B cell (primary cell): ENCODE measurements at regions of chrX and their contacts with region 1.

Region 1: GRCh38 chrX:49878834-49879659 is at the start of gene USP27X:
- DNase-seq: peak; percentile 90
- ATAC-seq: peak; percentile 93
- H3K4me3 ChIP-seq: peak within 1 kb of the TSS; percentile 8 to 64 (median 54)
- H3K4me3 Mint-ChIP-seq: peak within 1 kb of the TSS; percentile 86
- H3K27ac ChIP-seq: peak within 1 kb of the TSS; percentile 49 to 65
- H3K27ac Mint-ChIP-seq: peak within 1 kb of the TSS; percentile 83
- H3K4me1 ChIP-seq: peaks cover 10 to 26% of the 10 kb centered on the region in 2 donors
- H3K4me1 Mint-ChIP-seq: peaks cover 25% of the 10 kb centered on the region
- H3K27me3 ChIP-seq: no peaks in the 10 kb centered on the region
- H3K27me3 Mint-ChIP-seq: no peaks in the 10 kb centered on the region
- CTCF ChIP-seq: peak; percentile 65
- total RNA-seq, gene USP27X: 5.3 and 6.1 TPM in 2 replicates

Region 2: GRCh38 chrX:49761481-49761880 is 117.6 kb before region 1 on chrX:
- CTCF ChIA-PET with region 1: interaction called, 4 read pairs
- POLR2A ChIA-PET with region 1: no interaction called
- intact Hi-C with region 1: loop called (anchors 5 kb)
- DNase-seq: peak; percentile 13
- ATAC-seq: no peak
- H3K4me3 ChIP-seq: no peak overlapping the region
- H3K4me3 Mint-ChIP-seq: no peak overlapping the region
- H3K27ac ChIP-seq: no peak overlapping the region
- H3K27ac Mint-ChIP-seq: no peak overlapping the region
- H3K4me1 ChIP-seq: no peaks in the 10 kb centered on the region
- H3K4me1 Mint-ChIP-seq: no peaks in the 10 kb centered on the region
- H3K27me3 ChIP-seq: no peaks in the 10 kb centered on the region
- H3K27me3 Mint-ChIP-seq: peaks cover 4% of the 10 kb centered on the region
- CTCF ChIP-seq: peak; percentile 54

Region 3: DNA sequence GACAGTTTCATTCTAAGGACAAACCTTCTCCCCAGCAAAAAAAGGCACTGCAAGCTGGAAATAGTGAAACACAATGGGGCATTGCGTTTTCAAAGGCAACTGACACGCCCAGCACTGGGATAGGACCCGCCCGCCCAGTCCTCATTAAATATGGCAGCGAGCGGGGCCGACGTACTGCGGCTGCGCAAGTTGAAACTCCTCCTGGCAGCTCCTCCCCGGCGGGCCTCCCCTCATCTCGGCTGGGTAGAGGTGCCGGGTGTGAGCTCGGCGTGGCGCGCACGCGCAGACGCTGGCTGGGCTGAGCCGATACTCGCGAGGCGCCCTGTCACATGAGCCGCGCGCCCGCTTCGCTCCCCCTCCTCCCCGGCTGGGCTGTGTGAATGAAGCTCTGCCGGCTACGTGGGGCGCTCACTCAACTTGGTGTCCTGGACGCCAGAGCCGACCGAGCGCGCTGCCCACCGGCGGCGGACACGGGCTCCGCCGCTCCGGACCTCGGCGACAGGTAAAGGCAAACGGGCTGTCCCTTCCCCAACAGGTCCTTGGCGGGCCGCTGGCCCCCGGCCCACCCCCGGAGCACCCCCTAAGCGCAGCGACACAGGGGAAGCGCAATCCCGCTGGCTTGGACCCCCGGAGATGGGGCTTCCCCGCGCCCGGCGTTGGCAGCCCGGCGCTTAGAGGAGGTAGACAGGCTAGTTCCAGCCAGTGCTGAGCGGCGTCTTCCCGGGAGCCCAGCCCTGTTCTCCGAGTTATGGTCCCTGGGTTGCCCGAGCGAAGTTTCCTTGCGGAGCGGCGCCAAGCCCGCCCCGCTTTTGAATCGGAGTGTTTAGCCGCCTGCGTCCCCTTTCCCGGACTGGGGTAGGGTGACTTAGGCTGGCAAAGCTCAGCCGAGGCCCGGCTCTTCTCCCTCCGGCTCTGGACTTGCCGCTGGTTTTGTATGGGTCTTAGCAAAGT is 43.5 kb after region 1 on chrX and contains the start of gene CLCN5:
- CTCF ChIA-PET with region 1: interaction called, 6 read pairs
- POLR2A ChIA-PET with region 1: no interaction called
- intact Hi-C with region 1: loop called (anchors 1 kb)
- DNase-seq: peak; percentile 95
- ATAC-seq: peak; percentile 91
- H3K4me3 ChIP-seq: peak within 1 kb of the TSS; percentile 55 to 71 (median 64)
- H3K4me3 Mint-ChIP-seq: peak within 1 kb of the TSS; percentile 84
- H3K27ac ChIP-seq: peak within 1 kb of the TSS; percentile 24 to 61
- H3K27ac Mint-ChIP-seq: peak within 1 kb of the TSS; percentile 64
- H3K4me1 ChIP-seq: peaks cover 0 to 11% of the 10 kb centered on the region in 2 donors
- H3K4me1 Mint-ChIP-seq: peaks cover 10% of the 10 kb centered on the region
- H3K27me3 ChIP-seq: no peaks in the 10 kb centered on the region
- H3K27me3 Mint-ChIP-seq: no peaks in the 10 kb centered on the region
- CTCF ChIP-seq: no peak
- total RNA-seq, gene CLCN5: 3.6 and 6.3 TPM in 2 replicates

Region 4: DNA sequence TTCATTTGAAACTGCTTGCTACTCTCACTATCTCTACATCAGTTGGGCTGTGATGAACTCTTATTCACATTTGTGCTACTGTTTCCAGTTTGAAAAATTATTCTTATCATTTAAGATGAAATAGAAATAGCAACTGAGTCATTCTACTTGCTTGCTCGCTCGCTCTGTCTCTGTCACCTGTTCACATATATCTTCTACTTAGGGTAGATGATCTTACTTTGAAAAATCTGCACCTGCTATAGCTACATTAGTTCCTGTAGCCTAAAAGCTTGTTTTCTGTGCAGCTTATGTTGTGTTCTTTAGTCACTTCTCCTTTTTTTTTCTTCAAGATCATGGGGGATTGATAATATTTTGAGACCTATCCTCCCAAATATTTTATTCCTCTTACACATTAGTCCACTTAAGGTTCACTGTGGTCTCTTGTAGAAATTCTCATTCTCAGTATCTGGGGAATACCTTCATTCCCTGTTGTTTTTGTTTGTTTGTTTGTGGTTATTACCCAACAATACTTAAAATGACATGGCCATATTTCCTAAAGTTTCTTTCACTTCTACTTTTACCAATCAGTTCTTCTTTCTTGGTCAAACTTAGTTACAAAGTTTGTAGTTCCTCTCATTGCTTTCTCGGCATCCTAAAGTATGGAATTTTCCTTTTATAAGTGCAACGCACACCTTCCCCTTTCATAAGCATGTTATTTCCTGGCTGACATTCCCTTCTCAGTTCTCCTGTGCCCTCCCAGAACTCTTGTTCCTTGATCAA is 79.9 kb after region 1 on chrX:
- CTCF ChIA-PET with region 1: no interaction called
- POLR2A ChIA-PET with region 1: no interaction called
- intact Hi-C with region 1: no loop called
- DNase-seq: peak; percentile 7
- ATAC-seq: no peak
- H3K4me3 ChIP-seq: no peak overlapping the region
- H3K4me3 Mint-ChIP-seq: no peak overlapping the region
- H3K27ac ChIP-seq: no peak overlapping the region
- H3K27ac Mint-ChIP-seq: no peak overlapping the region
- H3K4me1 ChIP-seq: peaks cover 11% of the 10 kb centered on the region in 2 donors
- H3K4me1 Mint-ChIP-seq: peaks cover 1% of the 10 kb centered on the region
- H3K27me3 ChIP-seq: no peaks in the 10 kb centered on the region
- H3K27me3 Mint-ChIP-seq: no peaks in the 10 kb centered on the region
- CTCF ChIP-seq: no peak

Region 5: GRCh38 chrX:50204364-50204899 is 325.4 kb after region 1 on chrX and contains the start of gene CCNB3:
- CTCF ChIA-PET with region 1: no interaction called
- POLR2A ChIA-PET with region 1: no interaction called
- intact Hi-C with region 1: loop called (anchors 1 kb)
- DNase-seq: peak; percentile 87
- ATAC-seq: peak; percentile 94
- H3K4me3 ChIP-seq: peak within 1 kb of the TSS in 4 of 5 experiments; percentile 33 to 71 (median 40)
- H3K4me3 Mint-ChIP-seq: peak within 1 kb of the TSS; percentile 77
- H3K27ac ChIP-seq: peak within 1 kb of the TSS; percentile 38 to 51
- H3K27ac Mint-ChIP-seq: peak within 1 kb of the TSS; percentile 74
- H3K4me1 ChIP-seq: peaks cover 5 to 6% of the 10 kb centered on the region in 2 donors
- H3K4me1 Mint-ChIP-seq: peaks cover 11% of the 10 kb centered on the region
- H3K27me3 ChIP-seq: no peaks in the 10 kb centered on the region
- H3K27me3 Mint-ChIP-seq: no peaks in the 10 kb centered on the region
- CTCF ChIP-seq: peak; percentile 68
- total RNA-seq, gene CCNB3: 0.07 and 0.66 TPM in 2 replicates

Region 6: DNA sequence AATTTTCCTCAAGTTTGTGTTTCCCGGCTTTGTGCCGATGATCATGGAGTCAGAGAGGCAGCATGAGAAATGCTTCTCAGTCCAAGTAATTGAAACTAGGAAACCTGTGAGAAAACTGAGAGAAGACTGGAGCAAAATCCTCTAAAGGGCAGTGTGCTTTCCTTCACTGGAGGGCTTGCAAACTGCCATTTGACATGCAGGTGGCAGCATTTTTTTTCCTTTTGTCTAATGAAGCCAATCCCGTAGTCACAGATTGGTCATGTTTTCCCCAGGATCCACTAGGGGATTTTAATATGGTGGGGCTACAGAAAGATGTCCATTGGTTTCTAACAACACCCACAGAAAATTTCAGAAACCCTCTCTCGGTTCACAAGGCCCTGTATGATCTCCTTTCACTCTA is 1336.2 kb after region 1 on chrX:
- CTCF ChIA-PET with region 1: no interaction called
- POLR2A ChIA-PET with region 1: no interaction called
- intact Hi-C with region 1: no loop called
- DNase-seq: no peak
- ATAC-seq: no peak
- H3K4me3 ChIP-seq: no peak overlapping the region
- H3K4me3 Mint-ChIP-seq: no peak overlapping the region
- H3K27ac ChIP-seq: no peak overlapping the region
- H3K27ac Mint-ChIP-seq: no peak overlapping the region
- H3K4me1 ChIP-seq: no peaks in the 10 kb centered on the region
- H3K4me1 Mint-ChIP-seq: no peaks in the 10 kb centered on the region
- H3K27me3 ChIP-seq: no peaks in the 10 kb centered on the region
- H3K27me3 Mint-ChIP-seq: no peaks in the 10 kb centered on the region
- CTCF ChIP-seq: no peak